Activated CD4-positive, alpha-beta T cell treated with anti-CD3 and anti-CD28 coated beads for 36 hours (primary cell): ENCODE measurements at regions of chr1 and their contacts with region 1.

Region 1: GRCh38 chr1:45686317-45687013 is at the start of gene GPBP1L1:
- DNase-seq: peak; percentile 99
- ATAC-seq: peak; percentile 73
- H3K4me3 Mint-ChIP-seq: peak within 1 kb of the TSS; percentile 87
- H3K27ac Mint-ChIP-seq: peak within 1 kb of the TSS; percentile 95
- H3K4me1 Mint-ChIP-seq: peaks cover 52% of the 10 kb centered on the region
- H3K27me3 Mint-ChIP-seq: no peaks in the 10 kb centered on the region
- total RNA-seq, gene GPBP1L1: 101 to 112 TPM

Region 2: GRCh38 chr1:44631647-44632539 is 1054.6 kb before region 1 on chr1:
- CTCF ChIA-PET with region 1: no interaction called
- POLR2A ChIA-PET with region 1: no interaction called
- intact Hi-C with region 1: loop called in 1 of 2 experiments (anchors 2 kb)
- DNase-seq: peak; percentile 95
- ATAC-seq: peak; percentile 81
- H3K4me3 Mint-ChIP-seq: peak overlapping the region; percentile 86
- H3K27ac Mint-ChIP-seq: peak overlapping the region; percentile 97
- H3K4me1 Mint-ChIP-seq: peaks cover 40% of the 10 kb centered on the region
- H3K27me3 Mint-ChIP-seq: no peaks in the 10 kb centered on the region

Region 3: DNA sequence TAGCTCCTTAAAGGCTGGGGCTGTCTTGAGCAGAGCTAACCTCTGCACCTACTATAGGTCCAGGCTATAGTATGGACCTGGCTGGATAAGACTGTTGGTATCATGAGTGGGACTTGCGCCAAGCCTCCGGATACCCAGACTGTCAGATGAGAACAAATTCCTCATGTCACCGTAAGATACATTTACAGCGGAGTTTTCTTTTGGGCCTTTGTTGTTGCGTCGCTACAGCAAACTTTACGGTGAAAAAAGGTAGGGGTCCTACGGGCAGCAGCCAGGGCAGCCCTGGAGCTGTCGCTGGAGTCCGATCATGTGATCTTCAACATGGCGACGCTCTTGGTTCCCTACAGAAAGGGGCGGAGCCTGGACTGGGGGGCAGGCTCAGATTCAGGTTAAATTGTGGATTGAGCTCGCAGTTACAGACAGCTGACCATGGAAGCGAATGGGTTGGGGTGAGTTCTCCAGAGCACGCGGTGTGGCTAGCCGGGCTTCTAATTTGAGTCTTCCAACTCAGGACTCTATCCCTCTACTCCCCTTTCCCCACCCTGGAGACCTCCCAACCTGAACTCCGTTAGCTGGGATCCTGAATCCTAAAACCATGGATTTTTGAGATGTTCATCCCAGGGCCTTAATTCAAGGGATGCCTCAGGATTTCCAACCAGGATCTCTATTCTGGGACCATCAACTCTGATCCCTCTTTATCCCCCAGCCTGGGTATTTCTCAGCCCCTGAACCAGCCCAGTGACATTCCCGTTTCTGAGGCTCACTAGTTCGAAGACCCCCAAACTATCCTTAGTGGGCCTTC is 674.4 kb before region 1 on chr1 and contains the start of gene UROD:
- CTCF ChIA-PET with region 1: no interaction called
- POLR2A ChIA-PET with region 1: no interaction called
- intact Hi-C with region 1: loop called in 1 of 2 experiments (anchors 1 kb)
- DNase-seq: peak; percentile 96
- ATAC-seq: peak; percentile 80
- H3K4me3 Mint-ChIP-seq: peak within 1 kb of the TSS; percentile 74
- H3K27ac Mint-ChIP-seq: peak within 1 kb of the TSS; percentile 97
- H3K4me1 Mint-ChIP-seq: peaks cover 36% of the 10 kb centered on the region
- H3K27me3 Mint-ChIP-seq: no peaks in the 10 kb centered on the region
- total RNA-seq, gene UROD: 123 to 134 TPM

Region 4: DNA sequence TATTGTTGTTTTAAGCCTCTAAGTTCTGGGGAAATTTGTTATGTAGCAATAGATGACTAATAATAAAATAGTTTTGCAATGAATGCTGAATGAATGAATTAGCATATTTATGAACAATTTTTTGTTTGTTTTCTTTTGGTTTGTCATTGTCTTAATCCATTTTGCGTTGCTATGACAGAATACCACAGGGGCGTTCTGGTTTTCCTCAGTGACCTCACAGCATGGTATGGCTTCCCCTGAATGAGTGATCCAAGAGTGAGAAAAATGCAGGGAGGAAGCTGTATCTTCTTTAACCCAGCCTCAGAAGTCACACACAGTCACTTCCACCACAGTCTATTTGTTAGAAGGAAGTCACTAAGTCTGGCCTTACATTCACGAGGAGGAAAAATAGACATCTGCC is 413.5 kb before region 1 on chr1:
- CTCF ChIA-PET with region 1: no interaction called
- POLR2A ChIA-PET with region 1: no interaction called
- intact Hi-C with region 1: no loop called
- DNase-seq: no peak
- ATAC-seq: peak; percentile 30
- H3K4me3 Mint-ChIP-seq: no peak overlapping the region
- H3K27ac Mint-ChIP-seq: no peak overlapping the region
- H3K4me1 Mint-ChIP-seq: no peaks in the 10 kb centered on the region
- H3K27me3 Mint-ChIP-seq: no peaks in the 10 kb centered on the region

Region 5: DNA sequence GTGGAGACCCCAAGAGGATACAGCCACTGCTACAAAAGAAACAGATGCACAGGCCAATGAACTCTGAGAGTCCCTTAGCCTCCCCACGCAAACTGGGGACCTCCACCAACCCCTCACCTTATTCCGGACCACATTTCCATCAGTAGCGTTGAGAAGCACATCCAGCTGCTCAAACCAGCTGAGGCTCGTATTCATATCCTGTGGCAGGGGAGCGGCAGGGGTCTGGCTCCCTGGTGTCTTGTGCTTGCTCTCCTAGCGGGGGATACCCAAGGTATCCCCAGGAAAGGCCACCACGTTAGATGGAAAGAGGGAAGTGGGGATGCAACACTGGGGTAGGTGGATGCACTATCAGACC is 187.1 kb before region 1 on chr1:
- CTCF ChIA-PET with region 1: interaction called, 3 read pairs
- POLR2A ChIA-PET with region 1: interaction called, 3 read pairs
- intact Hi-C with region 1: loop called (anchors 1 kb)
- DNase-seq: peak; percentile 45
- ATAC-seq: no peak
- H3K4me3 Mint-ChIP-seq: peak overlapping the region; percentile 81
- H3K27ac Mint-ChIP-seq: peak overlapping the region; percentile 92
- H3K4me1 Mint-ChIP-seq: peaks cover 23% of the 10 kb centered on the region
- H3K27me3 Mint-ChIP-seq: no peaks in the 10 kb centered on the region

Region 6: GRCh38 chr1:45512641-45513054 is 173.8 kb before region 1 on chr1:
- CTCF ChIA-PET with region 1: no interaction called
- POLR2A ChIA-PET with region 1: no interaction called
- intact Hi-C with region 1: no loop called
- DNase-seq: peak; percentile 77
- ATAC-seq: peak; percentile 85
- H3K4me3 Mint-ChIP-seq: no peak overlapping the region
- H3K27ac Mint-ChIP-seq: no peak overlapping the region
- H3K4me1 Mint-ChIP-seq: peaks cover 11% of the 10 kb centered on the region
- H3K27me3 Mint-ChIP-seq: no peaks in the 10 kb centered on the region

Region 7: GRCh38 chr1:45654540-45655280 is 31.8 kb before region 1 on chr1:
- CTCF ChIA-PET with region 1: interaction called, 6 read pairs
- POLR2A ChIA-PET with region 1: interaction called, 8 read pairs
- intact Hi-C with region 1: loop called in 1 of 2 experiments (anchors 2 kb)
- DNase-seq: peak; percentile 23
- ATAC-seq: peak; percentile 99
- H3K4me3 Mint-ChIP-seq: no peak overlapping the region
- H3K27ac Mint-ChIP-seq: peak overlapping the region; percentile 2
- H3K4me1 Mint-ChIP-seq: peaks cover 15% of the 10 kb centered on the region
- H3K27me3 Mint-ChIP-seq: no peaks in the 10 kb centered on the region

Region 8: GRCh38 chr1:45787905-45788304 is 101.4 kb after region 1 on chr1:
- CTCF ChIA-PET with region 1: no interaction called
- POLR2A ChIA-PET with region 1: no interaction called
- intact Hi-C with region 1: no loop called
- DNase-seq: no peak
- ATAC-seq: no peak
- H3K4me3 Mint-ChIP-seq: no peak overlapping the region
- H3K27ac Mint-ChIP-seq: no peak overlapping the region
- H3K4me1 Mint-ChIP-seq: peaks cover 13% of the 10 kb centered on the region
- H3K27me3 Mint-ChIP-seq: peaks cover 7% of the 10 kb centered on the region

Region 9: DNA sequence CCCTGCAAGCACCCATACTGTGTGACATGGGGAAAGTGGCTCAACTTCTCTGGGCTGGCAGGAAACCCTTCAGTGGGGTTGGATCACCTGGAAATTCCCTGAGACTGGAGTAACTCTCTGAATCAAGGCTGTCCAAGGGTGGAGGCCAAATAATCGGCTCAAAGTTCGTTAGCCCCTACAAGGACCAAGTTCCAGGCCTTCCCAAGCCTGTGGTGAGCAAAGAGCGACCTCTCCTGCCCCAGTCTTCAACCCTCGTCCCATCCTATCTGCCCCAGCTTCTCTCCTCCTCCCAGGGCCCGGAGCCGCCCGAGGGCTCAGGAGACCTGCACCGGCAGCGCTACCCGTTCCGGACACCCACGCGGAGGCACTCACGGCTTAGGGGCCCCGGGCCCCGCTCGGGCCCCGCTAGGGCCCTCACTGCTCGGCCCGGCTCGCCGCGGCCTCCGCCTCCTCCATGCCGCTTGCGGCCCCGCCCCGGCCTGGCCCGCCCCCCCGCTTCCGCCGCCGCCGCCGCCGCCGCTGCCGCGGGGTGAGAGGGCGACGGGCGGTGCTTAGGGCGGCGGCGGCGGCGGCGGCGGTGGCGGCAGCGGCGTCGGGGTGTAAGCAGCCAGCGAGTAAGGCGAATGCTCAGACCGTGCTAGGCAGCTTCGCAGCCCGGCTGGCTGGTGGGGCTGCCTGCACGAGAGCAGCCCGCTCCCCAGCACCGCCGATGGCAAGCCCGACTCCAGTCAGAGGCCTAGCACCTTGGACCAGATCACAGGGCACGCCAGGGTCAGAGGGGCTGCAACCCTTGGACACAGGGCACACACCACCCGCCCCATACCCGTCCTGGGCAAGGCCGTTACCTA is 511.7 kb after region 1 on chr1 and contains the start of gene POMGNT1:
- CTCF ChIA-PET with region 1: interaction called, 3 read pairs
- POLR2A ChIA-PET with region 1: no interaction called
- intact Hi-C with region 1: loop called in 1 of 2 experiments (anchors 1 kb)
- DNase-seq: peak; percentile 87
- ATAC-seq: peak; percentile 94
- H3K4me3 Mint-ChIP-seq: peak within 1 kb of the TSS; percentile 84
- H3K27ac Mint-ChIP-seq: peak within 1 kb of the TSS; percentile 82
- H3K4me1 Mint-ChIP-seq: peaks cover 19% of the 10 kb centered on the region
- H3K27me3 Mint-ChIP-seq: peaks cover 2% of the 10 kb centered on the region
- total RNA-seq, gene POMGNT1: 36.4 to 36.5 TPM

Region 10: GRCh38 chr1:46603858-46604549 is 917.5 kb after region 1 on chr1 and contains the start of gene MKNK1:
- CTCF ChIA-PET with region 1: no interaction called
- POLR2A ChIA-PET with region 1: no interaction called
- intact Hi-C with region 1: loop called in 1 of 2 experiments (anchors 10 kb)
- DNase-seq: peak; percentile 99
- ATAC-seq: peak; percentile 98
- H3K4me3 Mint-ChIP-seq: peak within 1 kb of the TSS; percentile 87
- H3K27ac Mint-ChIP-seq: peak within 1 kb of the TSS; percentile 82
- H3K4me1 Mint-ChIP-seq: peaks cover 55% of the 10 kb centered on the region
- H3K27me3 Mint-ChIP-seq: no peaks in the 10 kb centered on the region
- total RNA-seq, gene MKNK1: 27.8 to 31.0 TPM